GM13977 (cell line): ENCODE measurements at regions of chr9 and their contacts with region 1.

Region 1: DNA sequence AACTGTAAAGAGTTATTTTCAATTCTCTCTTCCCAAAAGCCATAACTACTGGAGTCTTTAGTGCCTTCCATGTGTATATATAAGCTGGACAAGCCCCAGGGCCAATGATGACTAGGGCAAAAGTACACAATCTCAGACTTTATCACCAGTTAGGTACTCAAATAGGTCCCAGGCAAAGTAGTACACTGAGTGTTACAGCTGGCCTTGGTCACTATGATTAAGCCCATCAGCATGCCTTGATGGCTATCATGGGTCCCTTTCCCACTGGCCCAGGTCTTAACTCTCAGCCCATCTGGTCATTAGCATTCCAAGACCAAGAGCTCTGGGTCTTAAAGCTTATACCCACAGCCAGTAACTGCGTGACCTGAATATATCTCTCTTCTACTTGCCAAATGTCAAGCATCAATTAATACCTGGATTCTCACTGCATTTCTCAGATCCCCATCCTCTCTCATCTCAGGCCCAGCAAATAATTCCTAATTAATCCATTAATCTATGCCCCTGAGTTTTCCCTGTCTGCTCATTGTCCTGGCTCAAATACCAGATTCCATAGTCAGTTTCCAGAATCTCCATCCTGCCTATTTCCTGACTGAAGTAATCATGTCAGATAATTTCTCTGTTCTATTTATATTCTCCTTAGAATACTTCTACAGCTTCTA is 62.3 kb downstream of the NR6A1 start:
- DNase-seq: no peak
- CTCF ChIP-seq: no peak

Region 2: GRCh38 chr9:124617471-124618141 is 91.2 kb before region 1 on chr9:
- in situ Hi-C with region 1: loop called (anchors 10 kb)
- DNase-seq: peak; percentile 65
- CTCF ChIP-seq: peak; percentile 94

Region 3: GRCh38 chr9:124632077-124632621 is 76.6 kb before region 1 on chr9:
- in situ Hi-C with region 1: loop called (anchors 5 kb)
- DNase-seq: no peak
- CTCF ChIP-seq: no peak